ENCODE measurements at regions of chr15 and their contacts with region 1.

Region 1: DNA sequence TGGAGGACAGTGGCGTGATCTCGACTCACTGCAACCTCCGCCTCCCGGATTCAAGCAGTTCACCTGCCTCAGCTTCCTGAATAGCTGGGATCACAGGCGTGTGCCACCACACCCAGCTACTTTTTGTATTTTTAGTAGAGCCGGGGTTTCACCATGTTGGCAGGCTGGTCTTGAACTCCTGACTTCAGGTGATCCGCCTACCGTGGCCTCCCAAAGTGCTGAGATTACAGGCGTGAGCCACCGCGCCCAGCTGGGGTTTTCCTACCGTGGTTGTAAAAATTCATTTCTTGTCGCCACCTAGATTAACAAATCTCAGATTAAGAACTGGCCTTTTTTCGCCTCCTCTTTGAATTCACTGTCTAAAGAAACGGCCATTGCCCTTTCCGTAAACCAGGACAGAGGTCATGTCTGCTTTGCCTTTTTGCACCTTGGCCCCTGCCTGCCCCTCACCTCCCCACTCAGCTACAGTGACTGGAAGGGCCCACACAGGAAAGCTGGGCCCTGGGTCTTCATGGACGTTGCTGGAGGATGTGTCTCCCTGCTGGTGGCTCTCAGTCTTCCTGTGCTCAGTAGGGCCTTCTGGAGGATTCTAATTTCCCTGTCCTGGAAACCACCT is 17.2 kb downstream of the ZNF710 start:
- DNase-seq: peak; percentile 27
- H3K4me3 ChIP-seq: no peak overlapping the region
- H3K27ac ChIP-seq: peak overlapping the region in 3 of 4 donors; percentile 38 to 56 (median 53)
- H3K4me1 ChIP-seq: peaks cover 0 to 71% (median 36%) of the 10 kb centered on the region in 4 donors
- H3K27me3 ChIP-seq: no peaks in the 10 kb centered on the region
- CTCF ChIP-seq: no peak
- EP300 ChIP-seq: no peak
- POLR2A ChIP-seq: no peak

Region 2: GRCh38 chr15:89991312-89991711 is 27.0 kb before region 1 on chr15:
- in situ Hi-C with region 1: no loop called
- intact Hi-C with region 1: loop called (anchors 2 kb)
- DNase-seq: no peak
- H3K4me3 ChIP-seq: no peak overlapping the region
- H3K27ac ChIP-seq: no peak overlapping the region
- H3K4me1 ChIP-seq: no peaks in the 10 kb centered on the region
- H3K27me3 ChIP-seq: no peaks in the 10 kb centered on the region
- CTCF ChIP-seq: no peak
- EP300 ChIP-seq: no peak
- POLR2A ChIP-seq: no peak

Region 3: GRCh38 chr15:90334304-90334731 is 316.0 kb after region 1 on chr15:
- in situ Hi-C with region 1: no loop called
- intact Hi-C with region 1: no loop called
- DNase-seq: peak; percentile 30
- H3K4me3 ChIP-seq: no peak overlapping the region
- H3K27ac ChIP-seq: peak overlapping the region; percentile 60 to 74 (median 64)
- H3K4me1 ChIP-seq: peaks cover 0 to 29% (median 2%) of the 10 kb centered on the region in 4 donors
- H3K27me3 ChIP-seq: no peaks in the 10 kb centered on the region
- CTCF ChIP-seq: no peak
- EP300 ChIP-seq: no peak
- POLR2A ChIP-seq: no peak

Region 4: DNA sequence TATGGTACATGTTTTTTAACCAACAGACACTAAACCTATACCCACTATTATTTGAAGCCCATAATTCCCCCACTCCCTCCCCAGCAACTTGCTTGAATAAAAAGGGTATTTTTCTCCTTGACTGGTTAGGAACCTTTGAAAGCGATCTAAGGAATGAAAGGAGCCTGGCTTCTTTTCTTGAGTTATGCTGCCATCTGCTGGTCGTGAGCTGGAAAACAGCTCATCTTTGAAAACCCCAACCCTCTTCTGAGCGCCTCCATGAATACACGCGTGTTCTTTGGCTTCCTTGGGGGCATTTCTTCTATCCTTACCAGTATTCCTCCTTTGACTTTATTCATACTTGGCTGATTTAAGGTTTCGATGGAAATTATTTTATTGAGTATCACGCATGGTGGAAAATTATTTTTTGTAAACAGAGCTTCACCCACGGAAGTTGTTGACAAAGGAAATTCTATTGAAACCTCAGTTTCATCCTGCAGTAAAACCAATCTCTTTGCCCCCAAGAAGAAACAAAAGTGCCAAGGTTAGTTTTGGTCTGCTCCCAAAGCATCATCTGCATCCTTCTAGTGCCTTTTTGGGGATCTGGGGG is 1253.3 kb after region 1 on chr15:
- in situ Hi-C with region 1: no loop called
- intact Hi-C with region 1: no loop called
- DNase-seq: peak; percentile 57
- H3K4me3 ChIP-seq: no peak overlapping the region
- H3K27ac ChIP-seq: no peak overlapping the region
- H3K4me1 ChIP-seq: peaks cover 0 to 7% (median 0%) of the 10 kb centered on the region in 4 donors
- H3K27me3 ChIP-seq: peaks cover 14% of the 10 kb centered on the region
- CTCF ChIP-seq: peak; percentile 68 to 78 (median 73)
- EP300 ChIP-seq: no peak
- POLR2A ChIP-seq: no peak

Region 5: DNA sequence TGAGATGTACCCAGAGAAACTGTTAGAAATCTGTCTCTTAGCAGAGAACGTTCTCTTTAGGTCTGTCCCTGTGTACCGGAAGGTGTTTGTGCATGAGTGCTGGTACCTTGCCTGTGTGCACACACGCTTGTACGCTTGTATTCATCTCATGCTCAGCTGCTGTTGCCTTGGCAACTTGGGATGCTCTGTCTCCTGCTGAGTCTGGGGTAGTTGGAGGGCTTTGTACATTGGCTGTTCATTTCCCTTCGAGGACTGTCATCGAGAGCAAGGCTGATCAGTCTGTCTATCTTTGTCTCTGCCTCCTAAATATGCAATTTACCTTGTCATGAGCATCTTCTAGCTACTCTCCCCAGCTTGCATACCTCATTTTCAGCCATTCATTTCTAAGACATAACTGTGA is 1982.4 kb after region 1 on chr15:
- in situ Hi-C with region 1: no loop called
- intact Hi-C with region 1: no loop called
- DNase-seq: no peak
- H3K4me3 ChIP-seq: no peak overlapping the region
- H3K27ac ChIP-seq: no peak overlapping the region
- H3K4me1 ChIP-seq: peaks cover 0 to 6% (median 0%) of the 10 kb centered on the region in 4 donors
- H3K27me3 ChIP-seq: no peaks in the 10 kb centered on the region
- CTCF ChIP-seq: no peak
- EP300 ChIP-seq: no peak
- POLR2A ChIP-seq: no peak

Measured in transverse colon (tissue), 4 donors.